CD8-positive, alpha-beta T cell (primary cell): ENCODE measurements at regions of chr1 and their contacts with region 1.

Region 1: DNA sequence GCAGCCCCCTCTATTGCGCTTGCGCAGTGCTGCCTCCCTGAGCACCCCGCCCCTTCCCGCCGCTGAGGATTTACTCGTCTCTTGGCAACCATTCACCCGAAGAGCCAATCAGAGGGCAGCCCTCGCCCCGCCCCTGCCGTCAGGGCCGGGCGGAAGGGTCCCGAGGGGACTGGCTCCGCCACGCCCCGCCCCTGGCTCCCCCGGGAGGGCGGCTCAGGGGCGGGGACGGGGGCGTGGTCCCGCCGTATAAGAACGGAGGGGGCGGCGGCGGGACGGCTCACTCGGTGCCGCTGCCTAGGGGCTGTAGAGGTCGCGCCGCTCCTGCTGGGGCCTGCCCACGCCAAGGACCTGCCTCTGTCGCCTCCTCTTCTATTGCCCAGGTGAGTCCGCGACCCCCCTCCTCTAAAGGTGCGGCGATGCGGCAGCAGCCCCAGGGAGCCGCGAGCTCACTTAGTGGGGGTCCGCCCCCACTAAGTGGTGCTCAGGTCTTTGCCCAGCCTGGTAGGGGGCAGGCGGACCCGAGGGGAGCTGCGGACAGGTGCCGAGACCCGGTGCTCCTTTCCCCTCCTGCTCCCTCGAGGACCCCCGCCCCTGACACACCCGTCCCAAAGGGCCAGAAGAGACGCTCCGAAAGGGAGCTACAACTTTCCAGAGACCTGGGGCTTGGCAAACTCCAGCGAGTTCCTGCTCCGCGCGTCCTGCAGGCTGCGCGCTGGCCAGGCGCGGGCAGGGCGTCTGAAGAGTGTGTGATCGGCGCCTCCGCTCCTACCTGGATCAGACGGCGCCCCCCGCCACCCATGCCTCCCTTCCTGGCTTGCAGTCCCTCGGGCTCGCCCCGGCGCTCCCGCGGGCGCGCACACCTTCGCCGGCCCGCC is at the start of gene TENT5C:
- DNase-seq: peak; percentile 96 to 99 (median 99)
- ATAC-seq: peak; percentile 91
- H3K4me3 ChIP-seq: peak within 1 kb of the TSS; percentile 91 to 93
- H3K4me3 Mint-ChIP-seq: peak within 1 kb of the TSS; percentile 100
- H3K27ac ChIP-seq: peak within 1 kb of the TSS; percentile 95
- H3K27ac Mint-ChIP-seq: peak within 1 kb of the TSS; percentile 97
- H3K4me1 ChIP-seq: peaks cover 16% of the 10 kb centered on the region
- H3K4me1 Mint-ChIP-seq: peaks cover 36% of the 10 kb centered on the region
- H3K27me3 ChIP-seq: no peaks in the 10 kb centered on the region
- H3K27me3 Mint-ChIP-seq: no peaks in the 10 kb centered on the region
- CTCF ChIP-seq: no peak
- total RNA-seq, gene TENT5C: 146 to 150 TPM

Region 2: DNA sequence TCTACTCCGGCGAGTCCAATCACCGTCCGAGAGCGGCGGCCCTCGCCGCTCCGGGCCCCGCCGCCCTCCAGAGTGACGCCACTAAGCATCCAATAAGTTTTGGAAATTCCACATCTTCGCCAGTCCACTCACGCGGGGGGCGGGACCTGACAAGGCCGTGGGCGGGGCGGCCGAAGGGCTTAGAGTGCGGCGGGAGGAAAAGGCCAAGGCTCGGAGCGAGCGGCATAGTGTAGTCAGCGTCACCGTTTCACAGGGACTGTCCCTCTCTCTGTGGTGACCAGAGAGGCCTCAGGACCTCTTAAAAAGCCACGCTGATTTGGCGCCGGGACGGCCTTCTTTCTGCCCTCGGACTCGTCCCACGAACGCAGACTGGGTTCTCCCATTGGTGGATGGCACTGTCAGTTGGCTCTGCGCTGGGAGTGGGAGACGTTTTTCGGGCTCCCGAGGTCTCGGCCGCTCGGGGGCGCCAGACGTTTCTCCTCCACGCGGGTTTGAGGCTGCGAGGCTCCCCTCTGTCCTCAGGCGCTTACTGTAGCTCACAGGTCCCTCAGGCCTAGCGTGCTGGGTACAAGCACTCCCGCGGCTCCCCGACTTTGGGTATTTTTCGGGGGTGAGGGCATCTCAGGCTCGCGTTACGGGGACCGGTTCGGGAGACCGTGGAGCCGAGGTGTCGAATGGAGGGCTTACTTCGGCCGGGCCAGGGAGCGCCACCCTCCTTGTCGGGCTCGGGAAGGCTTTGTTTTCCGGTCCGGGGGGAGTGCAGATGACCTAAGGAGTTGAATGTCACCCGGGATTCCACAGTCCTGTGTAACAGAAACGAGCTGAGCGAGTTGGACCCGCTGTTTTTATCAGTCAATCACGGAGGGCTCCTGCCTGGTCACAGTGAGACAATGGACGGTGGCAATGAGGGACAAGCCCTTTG is 484.0 kb before region 1 on chr1:
- CTCF ChIA-PET with region 1: no interaction called
- POLR2A ChIA-PET with region 1: no interaction called
- intact Hi-C with region 1: loop called in 1 of 2 experiments (anchors 5 kb)
- DNase-seq: peak; percentile 67 to 89 (median 81)
- ATAC-seq: peak; percentile 84
- H3K4me3 ChIP-seq: peak overlapping the region; percentile 56 to 91
- H3K4me3 Mint-ChIP-seq: peak overlapping the region; percentile 84
- H3K27ac ChIP-seq: no peak overlapping the region
- H3K27ac Mint-ChIP-seq: no peak overlapping the region
- H3K4me1 ChIP-seq: peaks cover 10% of the 10 kb centered on the region
- H3K4me1 Mint-ChIP-seq: peaks cover 9% of the 10 kb centered on the region
- H3K27me3 ChIP-seq: peaks cover 0 to 2% of the 10 kb centered on the region in 2 experiments
- H3K27me3 Mint-ChIP-seq: peaks cover 11% of the 10 kb centered on the region
- CTCF ChIP-seq: peak; percentile 69

Region 3: GRCh38 chr1:117321680-117322609 is 284.1 kb before region 1 on chr1:
- CTCF ChIA-PET with region 1: no interaction called
- POLR2A ChIA-PET with region 1: no interaction called
- intact Hi-C with region 1: no loop called
- DNase-seq: no peak
- ATAC-seq: no peak
- H3K4me3 ChIP-seq: no peak overlapping the region
- H3K4me3 Mint-ChIP-seq: no peak overlapping the region
- H3K27ac ChIP-seq: no peak overlapping the region
- H3K27ac Mint-ChIP-seq: no peak overlapping the region
- H3K4me1 ChIP-seq: no peaks in the 10 kb centered on the region
- H3K4me1 Mint-ChIP-seq: no peaks in the 10 kb centered on the region
- H3K27me3 ChIP-seq: no peaks in the 10 kb centered on the region
- H3K27me3 Mint-ChIP-seq: peaks cover 9% of the 10 kb centered on the region
- CTCF ChIP-seq: no peak

Region 4: DNA sequence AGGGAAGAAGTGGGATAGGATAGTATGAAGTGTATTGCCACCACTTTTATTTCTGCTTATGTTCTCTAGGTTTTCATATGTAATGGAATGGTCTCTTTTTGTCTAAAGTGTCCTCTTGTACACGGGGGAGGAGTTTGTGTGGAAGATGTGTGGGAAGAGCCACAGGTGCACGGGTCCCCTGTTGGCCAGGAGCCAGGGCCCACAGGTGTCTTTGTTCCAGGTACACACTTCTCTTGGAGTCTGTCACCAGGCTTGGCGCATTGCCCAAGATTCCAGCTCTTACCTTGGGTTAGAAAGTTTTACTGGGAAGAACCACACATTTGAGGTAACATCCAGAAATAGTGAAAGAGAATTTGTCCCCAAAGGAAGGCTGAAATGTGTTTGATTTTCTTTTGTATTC is 10.3 kb after region 1 on chr1:
- CTCF ChIA-PET with region 1: interaction called, 3 read pairs
- POLR2A ChIA-PET with region 1: interaction called, 10 read pairs
- intact Hi-C with region 1: no loop called
- DNase-seq: peak in 1 of 9 experiments; percentile 38
- ATAC-seq: no peak
- H3K4me3 ChIP-seq: no peak overlapping the region
- H3K4me3 Mint-ChIP-seq: no peak overlapping the region
- H3K27ac ChIP-seq: no peak overlapping the region
- H3K27ac Mint-ChIP-seq: no peak overlapping the region
- H3K4me1 ChIP-seq: peaks cover 11% of the 10 kb centered on the region
- H3K4me1 Mint-ChIP-seq: peaks cover 62% of the 10 kb centered on the region
- H3K27me3 ChIP-seq: no peaks in the 10 kb centered on the region
- H3K27me3 Mint-ChIP-seq: peaks cover 15% of the 10 kb centered on the region
- CTCF ChIP-seq: no peak

Region 5: GRCh38 chr1:117664314-117664713 is 58.3 kb after region 1 on chr1:
- CTCF ChIA-PET with region 1: interaction called, 6 read pairs
- POLR2A ChIA-PET with region 1: interaction called, 65 read pairs
- intact Hi-C with region 1: loop called in 1 of 2 experiments (anchors 1 kb)
- DNase-seq: peak in 7 of 9 experiments; percentile 30 to 96 (median 59)
- ATAC-seq: peak; percentile 77
- H3K4me3 ChIP-seq: no peak overlapping the region
- H3K4me3 Mint-ChIP-seq: no peak overlapping the region
- H3K27ac ChIP-seq: peak overlapping the region; percentile 44 to 84
- H3K27ac Mint-ChIP-seq: peak overlapping the region; percentile 85
- H3K4me1 ChIP-seq: peaks cover 53% of the 10 kb centered on the region
- H3K4me1 Mint-ChIP-seq: peaks cover 72% of the 10 kb centered on the region
- H3K27me3 ChIP-seq: no peaks in the 10 kb centered on the region
- H3K27me3 Mint-ChIP-seq: peaks cover 17% of the 10 kb centered on the region
- CTCF ChIP-seq: no peak

Region 6: GRCh38 chr1:117735045-117735992 is 129.3 kb after region 1 on chr1:
- CTCF ChIA-PET with region 1: no interaction called
- POLR2A ChIA-PET with region 1: no interaction called
- intact Hi-C with region 1: loop called in 1 of 2 experiments (anchors 5 kb)
- DNase-seq: peak in 4 of 9 experiments; percentile 25 to 77 (median 52)
- ATAC-seq: peak; percentile 62
- H3K4me3 ChIP-seq: peak overlapping the region; percentile 22 to 38
- H3K4me3 Mint-ChIP-seq: peak overlapping the region; percentile 88
- H3K27ac ChIP-seq: peak overlapping the region; percentile 26 to 76
- H3K27ac Mint-ChIP-seq: peak overlapping the region; percentile 97
- H3K4me1 ChIP-seq: peaks cover 4% of the 10 kb centered on the region
- H3K4me1 Mint-ChIP-seq: peaks cover 22% of the 10 kb centered on the region
- H3K27me3 ChIP-seq: no peaks in the 10 kb centered on the region
- H3K27me3 Mint-ChIP-seq: no peaks in the 10 kb centered on the region
- CTCF ChIP-seq: no peak